ENCODE measurements at regions of chr7 and their contacts with region 1.

Region 1: GRCh38 chr7:106659963-106660861 is 746 bp downstream of the CCDC71L start:
- DNase-seq: peak; percentile 59 to 88 (median 75)
- ATAC-seq: peak; percentile 46
- H3K4me3 ChIP-seq: peak overlapping the region; percentile 76 to 87
- H3K4me3 Mint-ChIP-seq: peak overlapping the region; percentile 96
- H3K27ac ChIP-seq: peak overlapping the region; percentile 65 to 70
- H3K27ac Mint-ChIP-seq: peak overlapping the region; percentile 89
- H3K4me1 ChIP-seq: peaks cover 15% of the 10 kb centered on the region
- H3K4me1 Mint-ChIP-seq: peaks cover 37% of the 10 kb centered on the region
- H3K27me3 ChIP-seq: no peaks in the 10 kb centered on the region
- H3K27me3 Mint-ChIP-seq: no peaks in the 10 kb centered on the region
- CTCF ChIP-seq: peak; percentile 82

Region 2: DNA sequence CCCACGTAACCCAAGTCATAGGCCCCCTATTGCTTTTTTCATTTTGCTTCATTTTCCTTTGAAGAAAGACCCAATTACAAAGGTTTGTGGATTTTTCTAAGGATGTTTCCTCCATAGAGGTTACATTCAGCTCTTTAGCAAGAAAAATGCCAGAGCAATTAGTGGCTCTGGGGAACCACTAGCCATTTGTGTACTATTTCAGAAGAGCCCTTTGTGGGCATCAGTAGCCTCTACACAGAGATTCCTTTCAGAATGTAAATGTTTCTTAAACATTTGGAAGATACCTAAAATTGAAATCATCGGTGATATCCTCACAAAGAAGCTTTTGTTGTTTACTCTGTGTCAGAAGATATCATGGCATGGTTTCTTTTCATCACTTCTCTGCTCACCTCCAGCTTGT is 1937.2 kb before region 1 on chr7:
- CTCF ChIA-PET with region 1: no interaction called
- POLR2A ChIA-PET with region 1: no interaction called
- intact Hi-C with region 1: no loop called
- DNase-seq: no peak
- ATAC-seq: no peak
- H3K4me3 ChIP-seq: no peak overlapping the region
- H3K4me3 Mint-ChIP-seq: no peak overlapping the region
- H3K27ac ChIP-seq: no peak overlapping the region
- H3K27ac Mint-ChIP-seq: no peak overlapping the region
- H3K4me1 ChIP-seq: no peaks in the 10 kb centered on the region
- H3K4me1 Mint-ChIP-seq: no peaks in the 10 kb centered on the region
- H3K27me3 ChIP-seq: no peaks in the 10 kb centered on the region
- H3K27me3 Mint-ChIP-seq: no peaks in the 10 kb centered on the region
- CTCF ChIP-seq: no peak

Region 3: GRCh38 chr7:106285051-106285854 is 375.0 kb before region 1 on chr7:
- CTCF ChIA-PET with region 1: no interaction called
- POLR2A ChIA-PET with region 1: no interaction called
- intact Hi-C with region 1: loop called (anchors 1 to 5 kb)
- DNase-seq: peak; percentile 92 to 99 (median 96)
- ATAC-seq: peak; percentile 89
- H3K4me3 ChIP-seq: peak overlapping the region; percentile 81 to 83
- H3K4me3 Mint-ChIP-seq: peak overlapping the region; percentile 96
- H3K27ac ChIP-seq: peak overlapping the region; percentile 71 to 93
- H3K27ac Mint-ChIP-seq: peak overlapping the region; percentile 98
- H3K4me1 ChIP-seq: peaks cover 17% of the 10 kb centered on the region
- H3K4me1 Mint-ChIP-seq: peaks cover 27% of the 10 kb centered on the region
- H3K27me3 ChIP-seq: no peaks in the 10 kb centered on the region
- H3K27me3 Mint-ChIP-seq: peaks cover 2% of the 10 kb centered on the region
- CTCF ChIP-seq: no peak

Region 4: GRCh38 chr7:106369352-106369751 is 290.9 kb before region 1 on chr7:
- CTCF ChIA-PET with region 1: no interaction called
- POLR2A ChIA-PET with region 1: no interaction called
- intact Hi-C with region 1: no loop called
- DNase-seq: peak in 1 of 9 experiments; percentile 18
- ATAC-seq: no peak
- H3K4me3 ChIP-seq: no peak overlapping the region
- H3K4me3 Mint-ChIP-seq: no peak overlapping the region
- H3K27ac ChIP-seq: no peak overlapping the region
- H3K27ac Mint-ChIP-seq: no peak overlapping the region
- H3K4me1 ChIP-seq: no peaks in the 10 kb centered on the region
- H3K4me1 Mint-ChIP-seq: no peaks in the 10 kb centered on the region
- H3K27me3 ChIP-seq: no peaks in the 10 kb centered on the region
- H3K27me3 Mint-ChIP-seq: peaks cover under 1% of the 10 kb centered on the region
- CTCF ChIP-seq: no peak

Region 5: DNA sequence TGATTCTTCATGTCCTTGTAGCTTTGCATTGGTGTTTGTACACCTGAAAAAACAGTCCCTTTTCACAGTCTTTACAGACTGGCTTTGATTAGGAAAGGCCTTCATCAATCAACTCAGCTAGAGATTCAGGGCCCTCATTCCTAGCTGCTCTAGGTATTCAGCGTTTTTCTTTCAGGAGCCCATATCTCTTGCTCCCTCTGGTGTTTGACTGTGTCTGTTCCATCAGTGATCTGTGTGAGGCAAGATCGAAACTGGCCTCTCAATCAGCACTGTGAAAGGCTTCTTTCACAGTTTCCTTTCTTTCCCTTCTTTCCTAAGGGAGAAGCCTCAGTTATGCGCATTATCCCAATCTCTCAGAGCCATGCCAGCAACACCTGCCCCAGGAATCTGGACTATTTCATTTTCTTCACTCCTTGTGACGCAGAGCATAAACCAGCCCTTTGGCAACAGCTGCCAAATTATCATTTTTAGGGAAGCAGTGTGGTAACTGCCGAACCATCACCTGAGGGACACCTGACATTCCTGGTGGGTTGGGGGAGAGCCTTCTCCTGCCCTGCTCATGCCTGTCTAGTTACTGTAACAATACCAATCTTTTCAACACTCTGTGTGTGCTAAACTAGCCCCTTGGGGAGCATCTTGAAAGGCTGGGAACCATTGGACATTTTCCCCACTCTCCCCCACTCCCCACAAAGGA is 76.4 kb after region 1 on chr7:
- CTCF ChIA-PET with region 1: interaction called, 15 read pairs
- POLR2A ChIA-PET with region 1: interaction called, 5 read pairs
- intact Hi-C with region 1: loop called (anchors 1 kb)
- DNase-seq: peak in 7 of 9 experiments; percentile 11 to 75 (median 22)
- ATAC-seq: peak; percentile 77
- H3K4me3 ChIP-seq: no peak overlapping the region
- H3K4me3 Mint-ChIP-seq: no peak overlapping the region
- H3K27ac ChIP-seq: no peak overlapping the region
- H3K27ac Mint-ChIP-seq: no peak overlapping the region
- H3K4me1 ChIP-seq: peaks cover 6% of the 10 kb centered on the region
- H3K4me1 Mint-ChIP-seq: peaks cover 14% of the 10 kb centered on the region
- H3K27me3 ChIP-seq: no peaks in the 10 kb centered on the region
- H3K27me3 Mint-ChIP-seq: no peaks in the 10 kb centered on the region
- CTCF ChIP-seq: peak; percentile 54

Region 6: GRCh38 chr7:106870983-106871410 is 210.8 kb after region 1 on chr7:
- CTCF ChIA-PET with region 1: interaction called, 3 read pairs
- POLR2A ChIA-PET with region 1: no interaction called
- intact Hi-C with region 1: loop called in 1 of 2 experiments (anchors 5 kb)
- DNase-seq: peak in 2 of 9 experiments; percentile 30 to 52
- ATAC-seq: peak; percentile 62
- H3K4me3 ChIP-seq: peak overlapping the region in 1 of 2 experiments; percentile 25
- H3K4me3 Mint-ChIP-seq: peak overlapping the region; percentile 55
- H3K27ac ChIP-seq: no peak overlapping the region
- H3K27ac Mint-ChIP-seq: peak overlapping the region; percentile 78
- H3K4me1 ChIP-seq: peaks cover 37% of the 10 kb centered on the region
- H3K4me1 Mint-ChIP-seq: peaks cover 81% of the 10 kb centered on the region
- H3K27me3 ChIP-seq: no peaks in the 10 kb centered on the region
- H3K27me3 Mint-ChIP-seq: no peaks in the 10 kb centered on the region
- CTCF ChIP-seq: no peak

Region 7: GRCh38 chr7:107563775-107564552 is 903.8 kb after region 1 on chr7 and contains the starts of genes COG5 and DUS4L:
- CTCF ChIA-PET with region 1: no interaction called
- POLR2A ChIA-PET with region 1: no interaction called
- intact Hi-C with region 1: loop called (anchors 2 to 5 kb)
- DNase-seq: peak; percentile 73 to 93 (median 86)
- ATAC-seq: peak; percentile 83
- H3K4me3 ChIP-seq: peak within 1 kb of the TSS; percentile 91 to 97
- H3K4me3 Mint-ChIP-seq: peak within 1 kb of the TSS; percentile 80
- H3K27ac ChIP-seq: peak within 1 kb of the TSS; percentile 95 to 96
- H3K27ac Mint-ChIP-seq: peak within 1 kb of the TSS; percentile 89
- H3K4me1 ChIP-seq: peaks cover 46% of the 10 kb centered on the region
- H3K4me1 Mint-ChIP-seq: peaks cover 65% of the 10 kb centered on the region
- H3K27me3 ChIP-seq: no peaks in the 10 kb centered on the region
- H3K27me3 Mint-ChIP-seq: no peaks in the 10 kb centered on the region
- CTCF ChIP-seq: no peak
- total RNA-seq, gene COG5: 45.7 to 46.8 TPM
- total RNA-seq, gene DUS4L: 13.1 to 16.4 TPM

Region 8: GRCh38 chr7:107890962-107891635 is 1230.9 kb after region 1 on chr7 and contains the start of gene DLD:
- CTCF ChIA-PET with region 1: no interaction called
- POLR2A ChIA-PET with region 1: no interaction called
- intact Hi-C with region 1: loop called in 1 of 2 experiments (anchors 10 kb)
- DNase-seq: peak; percentile 86 to 97 (median 93)
- ATAC-seq: peak; percentile 97
- H3K4me3 ChIP-seq: peak within 1 kb of the TSS; percentile 79 to 86
- H3K4me3 Mint-ChIP-seq: peak within 1 kb of the TSS; percentile 98
- H3K27ac ChIP-seq: peak within 1 kb of the TSS; percentile 88 to 94
- H3K27ac Mint-ChIP-seq: peak within 1 kb of the TSS; percentile 98
- H3K4me1 ChIP-seq: peaks cover 48% of the 10 kb centered on the region
- H3K4me1 Mint-ChIP-seq: peaks cover 48% of the 10 kb centered on the region
- H3K27me3 ChIP-seq: no peaks in the 10 kb centered on the region
- H3K27me3 Mint-ChIP-seq: no peaks in the 10 kb centered on the region
- CTCF ChIP-seq: no peak
- total RNA-seq, gene DLD: 83.5 to 85.9 TPM